Activated CD4-positive, alpha-beta T cell treated with anti-CD3 and anti-CD28 coated beads, Interleukin-2, amount 10 ng/mL, durations not matched to agents 24 days and 14 days (primary cell): ENCODE measurements at regions of chr17 and their contacts with region 1.

Region 1: GRCh38 chr17:35119368-35120165 is at the start of gene RAD51D:
- DNase-seq: peak; percentile 94
- H3K4me3 Mint-ChIP-seq: peak within 1 kb of the TSS; percentile 94
- H3K27ac Mint-ChIP-seq: peak within 1 kb of the TSS; percentile 89
- H3K4me1 Mint-ChIP-seq: peaks cover 36% of the 10 kb centered on the region
- H3K27me3 Mint-ChIP-seq: no peaks in the 10 kb centered on the region
- total RNA-seq, gene RAD51D: 32.6 and 35.2 TPM in 2 replicates

Region 2: DNA sequence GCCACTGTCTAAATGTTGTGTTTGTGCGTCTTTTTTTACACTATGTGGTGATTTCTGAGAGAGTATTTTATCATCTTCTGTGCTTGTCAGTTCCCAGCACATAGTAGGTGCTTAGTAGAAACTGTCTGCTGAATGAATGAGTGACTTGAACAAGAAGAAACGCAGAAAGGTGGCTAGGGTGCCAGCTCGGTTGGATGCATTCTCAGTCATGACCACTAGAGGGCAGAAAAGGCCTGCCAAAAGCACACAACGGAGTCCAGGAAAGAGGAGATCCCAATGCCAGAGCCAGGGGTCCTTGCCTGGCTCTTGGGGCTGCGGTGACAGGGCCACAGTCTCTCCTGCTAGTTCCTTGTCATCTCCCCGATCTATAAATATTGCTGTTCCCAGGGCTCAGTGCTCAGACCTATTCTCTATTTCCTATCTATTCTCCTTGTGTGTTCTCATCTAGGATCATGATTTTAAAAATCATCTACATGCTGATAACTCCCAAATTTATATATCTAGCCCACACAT is 699.3 kb before region 1 on chr17:
- intact Hi-C with region 1: loop called (anchors 2 kb)
- DNase-seq: peak; percentile 90
- H3K4me3 Mint-ChIP-seq: no peak overlapping the region
- H3K27ac Mint-ChIP-seq: no peak overlapping the region
- H3K4me1 Mint-ChIP-seq: peaks cover 2% of the 10 kb centered on the region
- H3K27me3 Mint-ChIP-seq: peaks cover 43% of the 10 kb centered on the region

Region 3: GRCh38 chr17:34637548-34638525 is 481.7 kb before region 1 on chr17:
- intact Hi-C with region 1: loop called (anchors 1 kb)
- DNase-seq: peak; percentile 93
- H3K4me3 Mint-ChIP-seq: peak overlapping the region; percentile 35
- H3K27ac Mint-ChIP-seq: no peak overlapping the region
- H3K4me1 Mint-ChIP-seq: no peaks in the 10 kb centered on the region
- H3K27me3 Mint-ChIP-seq: peaks cover 35% of the 10 kb centered on the region

Region 4: GRCh38 chr17:34980681-34981537 is 138.7 kb before region 1 on chr17:
- intact Hi-C with region 1: loop called (anchors 1 kb)
- DNase-seq: peak; percentile 95
- H3K4me3 Mint-ChIP-seq: peak overlapping the region; percentile 96
- H3K27ac Mint-ChIP-seq: peak overlapping the region; percentile 96
- H3K4me1 Mint-ChIP-seq: peaks cover 47% of the 10 kb centered on the region
- H3K27me3 Mint-ChIP-seq: no peaks in the 10 kb centered on the region

Region 5: GRCh38 chr17:35046740-35047283 is 72.8 kb before region 1 on chr17:
- intact Hi-C with region 1: loop called (anchors 1 kb)
- DNase-seq: peak; percentile 91
- H3K4me3 Mint-ChIP-seq: peak overlapping the region; percentile 63
- H3K27ac Mint-ChIP-seq: peak overlapping the region; percentile 94
- H3K4me1 Mint-ChIP-seq: peaks cover 41% of the 10 kb centered on the region
- H3K27me3 Mint-ChIP-seq: no peaks in the 10 kb centered on the region

Region 6: DNA sequence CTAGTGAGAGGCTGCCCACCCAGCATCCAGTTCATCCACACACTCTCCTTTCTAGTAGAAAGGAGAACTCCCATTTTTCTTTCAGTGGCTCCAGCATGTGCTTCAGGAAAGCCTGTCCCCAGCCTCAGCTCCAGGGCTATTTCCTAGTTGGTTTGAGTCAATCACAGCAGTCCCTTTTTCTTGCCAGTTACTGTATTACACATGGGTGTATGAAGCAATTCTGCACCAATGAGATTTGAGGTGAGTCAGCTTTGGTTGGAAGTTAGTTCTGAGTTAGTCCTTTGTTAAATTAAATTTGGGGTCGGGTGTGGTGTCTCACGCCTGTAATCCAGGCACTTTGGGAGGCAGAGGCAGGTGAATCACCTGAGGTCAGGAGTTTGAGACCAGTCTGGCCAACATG is 24.7 kb before region 1 on chr17:
- intact Hi-C with region 1: no loop called
- DNase-seq: no peak
- H3K4me3 Mint-ChIP-seq: no peak overlapping the region
- H3K27ac Mint-ChIP-seq: no peak overlapping the region
- H3K4me1 Mint-ChIP-seq: peaks cover 11% of the 10 kb centered on the region
- H3K27me3 Mint-ChIP-seq: no peaks in the 10 kb centered on the region

Region 7: GRCh38 chr17:35129973-35130351 is 10.4 kb after region 1 on chr17:
- intact Hi-C with region 1: no loop called
- DNase-seq: no peak
- H3K4me3 Mint-ChIP-seq: no peak overlapping the region
- H3K27ac Mint-ChIP-seq: no peak overlapping the region
- H3K4me1 Mint-ChIP-seq: no peaks in the 10 kb centered on the region
- H3K27me3 Mint-ChIP-seq: no peaks in the 10 kb centered on the region